ENCODE measurements at regions of chr5 and their contacts with region 1.

Region 1: DNA sequence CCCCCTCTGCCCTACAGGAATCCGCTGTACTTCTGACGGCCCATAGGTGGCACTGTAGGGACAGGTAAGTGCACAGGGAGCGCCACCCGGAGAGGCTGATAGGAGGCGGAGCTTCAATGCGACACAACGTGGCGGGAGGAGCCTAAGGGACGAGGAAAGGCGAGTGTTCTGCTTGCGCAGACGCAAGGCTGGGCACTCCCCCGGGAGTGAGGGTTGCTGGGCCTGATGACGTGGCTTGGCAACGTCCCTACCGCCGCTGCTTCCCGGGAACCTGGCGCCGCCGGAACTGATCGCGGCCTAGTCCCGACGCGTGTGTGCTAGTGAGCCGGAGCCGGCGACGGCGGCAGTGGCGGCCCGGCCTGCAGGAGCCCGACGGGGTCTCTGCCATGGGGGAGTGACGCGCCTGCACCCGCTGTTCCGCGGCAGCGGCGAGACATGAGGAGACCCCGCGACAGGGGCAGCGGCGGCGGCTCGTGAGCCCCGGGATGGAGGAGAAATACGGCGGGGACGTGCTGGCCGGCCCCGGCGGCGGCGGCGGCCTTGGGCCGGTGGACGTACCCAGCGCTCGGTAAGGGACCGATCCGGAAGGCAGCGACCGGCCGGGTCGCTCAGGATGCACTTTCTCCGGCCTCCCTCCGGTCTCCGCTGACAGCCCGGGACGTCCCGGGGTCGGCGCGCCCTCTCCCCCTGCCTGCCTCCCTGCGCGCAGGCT is at the start of gene SLC30A5:
- DNase-seq: peak; percentile 100
- H3K4me3 ChIP-seq: peak within 1 kb of the TSS; percentile 83
- H3K27ac ChIP-seq: peak within 1 kb of the TSS; percentile 52
- H3K27me3 ChIP-seq: no peaks in the 10 kb centered on the region
- CTCF ChIP-seq: peak; percentile 95
- polyA plus RNA-seq, gene SLC30A5: 38.4 and 49.2 TPM in 2 replicates

Region 2: GRCh38 chr5:69042915-69043658 is 50.8 kb before region 1 on chr5:
- CTCF ChIA-PET with region 1: interaction called, 22 read pairs
- POLR2A ChIA-PET with region 1: no interaction called
- DNase-seq: peak; percentile 89
- H3K4me3 ChIP-seq: peak overlapping the region; percentile 47
- H3K27ac ChIP-seq: no peak overlapping the region
- H3K27me3 ChIP-seq: no peaks in the 10 kb centered on the region
- CTCF ChIP-seq: peak; percentile 85

Region 3: DNA sequence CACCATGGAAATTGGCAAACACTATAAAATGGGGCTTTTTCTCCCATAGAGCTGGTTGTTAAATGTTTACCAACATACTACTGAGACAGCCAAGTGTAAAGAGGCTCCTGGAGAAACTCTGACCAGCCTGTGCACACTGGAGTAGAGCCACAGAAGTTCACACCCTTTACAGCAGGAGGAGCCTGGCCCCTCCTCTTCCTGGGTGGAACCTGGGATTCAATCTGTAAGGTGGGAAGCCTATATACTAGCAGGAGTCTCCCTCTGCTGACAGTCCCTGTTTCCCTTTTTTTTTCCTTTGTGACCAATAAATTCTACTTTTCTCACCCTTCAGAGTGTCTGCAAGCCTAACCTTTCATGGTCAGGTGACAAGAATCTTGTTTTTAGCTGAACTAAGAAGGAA is 10.5 kb before region 1 on chr5:
- CTCF ChIA-PET with region 1: interaction called, 37 read pairs
- POLR2A ChIA-PET with region 1: no interaction called
- DNase-seq: no peak
- H3K4me3 ChIP-seq: no peak overlapping the region
- H3K27ac ChIP-seq: no peak overlapping the region
- H3K27me3 ChIP-seq: no peaks in the 10 kb centered on the region
- CTCF ChIP-seq: no peak; the same call in 1 of the 2 replicates

Region 4: GRCh38 chr5:69113851-69114250 is 19.9 kb after region 1 on chr5:
- CTCF ChIA-PET with region 1: interaction called, 20 read pairs
- POLR2A ChIA-PET with region 1: no interaction called
- DNase-seq: no peak
- H3K4me3 ChIP-seq: no peak overlapping the region
- H3K27ac ChIP-seq: no peak overlapping the region
- H3K27me3 ChIP-seq: no peaks in the 10 kb centered on the region
- CTCF ChIP-seq: no peak

Region 5: DNA sequence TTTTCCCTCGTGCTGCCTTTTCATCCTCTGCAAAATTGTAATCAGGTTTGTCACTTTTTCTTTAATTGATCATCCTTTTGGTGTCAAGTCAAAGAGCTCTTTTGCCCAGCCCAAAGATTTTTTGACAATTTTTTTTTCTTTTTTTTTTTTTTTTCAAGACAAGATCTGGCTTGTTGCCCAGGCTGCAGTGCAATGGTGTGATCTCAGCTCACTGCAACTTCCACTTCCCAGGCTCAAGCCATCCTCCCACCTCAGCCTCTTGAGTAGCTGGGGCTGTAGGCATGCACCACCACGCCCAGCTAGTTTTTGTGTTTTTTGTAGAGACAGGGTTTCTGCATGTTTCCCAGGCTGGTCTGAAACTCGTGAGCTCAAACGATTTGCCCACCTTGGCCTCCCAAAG is 177.4 kb after region 1 on chr5:
- CTCF ChIA-PET with region 1: interaction called, 11 read pairs
- POLR2A ChIA-PET with region 1: interaction called, 3 read pairs
- DNase-seq: no peak
- H3K4me3 ChIP-seq: no peak overlapping the region
- H3K27ac ChIP-seq: peak overlapping the region; percentile 48
- H3K27me3 ChIP-seq: no peaks in the 10 kb centered on the region
- CTCF ChIP-seq: no peak

Region 6: GRCh38 chr5:69374911-69375446 is 281.1 kb after region 1 on chr5:
- CTCF ChIA-PET with region 1: interaction called, 22 read pairs
- POLR2A ChIA-PET with region 1: interaction called, 7 read pairs
- DNase-seq: no peak
- H3K4me3 ChIP-seq: no peak overlapping the region
- H3K27ac ChIP-seq: no peak overlapping the region
- H3K27me3 ChIP-seq: no peaks in the 10 kb centered on the region
- CTCF ChIP-seq: no peak